GM12878 (cell line): ENCODE measurements at regions of chr2 and their contacts with region 1.

Region 1: GRCh38 chr2:117814417-117815264 is at the start of gene DDX18:
- DNase-seq: peak; percentile 93
- ATAC-seq: peak; percentile 88
- H3K4me3 ChIP-seq: peak within 1 kb of the TSS; percentile 90
- H3K27ac ChIP-seq: peak within 1 kb of the TSS; percentile 87
- H3K4me1 ChIP-seq: peaks cover 9% of the 10 kb centered on the region; the same call in 1 of the 2 replicates
- H3K27me3 ChIP-seq: no peaks in the 10 kb centered on the region
- CTCF ChIP-seq: peak; percentile 98 to 100 (median 100); a peak in 5 of 6 replicates
- EP300 ChIP-seq: peak in 1 of 2 experiments; percentile 42; a peak in 2 of 4 replicates
- POLR2A ChIP-seq: peak; percentile 90
- RAD21 ChIP-seq: peak; percentile 66
- polyA plus RNA-seq, gene DDX18: 54.3 to 60.3 TPM

Region 2: GRCh38 chr2:117776888-117777287 is 37.8 kb before region 1 on chr2:
- CTCF ChIA-PET with region 1: no interaction called
- POLR2A ChIA-PET with region 1: no interaction called
- RAD21 ChIA-PET with region 1: no interaction called
- SMC1A ChIA-PET with region 1: no interaction called
- in situ Hi-C with region 1: no loop called
- intact Hi-C with region 1: no loop called
- DNase-seq: no peak
- ATAC-seq: no peak
- H3K4me3 ChIP-seq: no peak overlapping the region
- H3K27ac ChIP-seq: no peak overlapping the region
- H3K4me1 ChIP-seq: no peaks in the 10 kb centered on the region
- H3K27me3 ChIP-seq: no peaks in the 10 kb centered on the region
- CTCF ChIP-seq: no peak
- EP300 ChIP-seq: no peak
- POLR2A ChIP-seq: no peak
- RAD21 ChIP-seq: no peak

Region 3: DNA sequence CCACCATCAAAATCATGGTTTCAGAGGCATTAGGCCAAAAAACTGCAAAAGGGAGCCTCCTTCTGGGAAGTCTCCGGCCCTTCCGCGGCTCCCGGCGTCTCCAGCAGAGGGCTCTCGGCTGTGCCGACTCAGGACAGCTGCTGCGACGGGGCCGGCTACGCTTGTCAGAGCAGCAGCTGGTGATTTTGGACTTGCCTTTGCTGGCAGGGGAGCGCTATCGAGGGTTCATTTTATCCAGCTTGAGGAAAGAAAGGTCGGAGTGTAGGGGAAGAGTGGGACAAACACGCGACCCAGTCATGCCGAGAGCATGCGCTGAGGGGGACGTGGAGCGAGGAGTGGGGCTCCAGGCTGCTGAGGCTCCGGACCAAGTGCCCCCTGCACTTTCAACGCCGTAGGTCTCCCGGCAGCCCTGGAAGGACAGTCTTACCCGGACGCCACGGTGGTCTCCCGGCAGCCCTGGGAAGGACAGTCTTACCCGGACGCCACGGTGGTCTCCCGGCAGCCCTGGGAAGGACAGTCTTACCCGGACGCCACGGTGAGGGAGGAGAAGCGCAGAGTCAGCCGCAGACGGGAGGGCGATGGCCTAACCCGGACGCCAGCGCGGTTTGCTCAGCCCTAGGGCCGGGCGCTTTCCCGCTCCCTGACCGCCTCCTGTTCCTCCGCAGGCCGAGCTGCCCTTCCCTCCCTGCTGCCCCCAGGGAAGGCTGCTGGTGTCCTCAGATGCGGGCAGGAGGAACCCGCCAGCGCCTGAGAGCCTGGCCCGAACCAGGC is 21.5 kb after region 1 on chr2:
- CTCF ChIA-PET with region 1: interaction called, 11 read pairs
- POLR2A ChIA-PET with region 1: no interaction called
- RAD21 ChIA-PET with region 1: interaction called, 3 read pairs
- SMC1A ChIA-PET with region 1: interaction called, 3 read pairs
- in situ Hi-C with region 1: no loop called
- intact Hi-C with region 1: no loop called
- DNase-seq: no peak
- ATAC-seq: peak; percentile 82
- H3K4me3 ChIP-seq: no peak overlapping the region
- H3K27ac ChIP-seq: no peak overlapping the region
- H3K4me1 ChIP-seq: no peaks in the 10 kb centered on the region
- H3K27me3 ChIP-seq: no peaks in the 10 kb centered on the region
- CTCF ChIP-seq: peak; percentile 50 to 64 (median 55)
- EP300 ChIP-seq: no peak
- POLR2A ChIP-seq: peak; percentile 37
- RAD21 ChIP-seq: peak; percentile 46

Region 4: GRCh38 chr2:117936871-117937428 is 122.3 kb after region 1 on chr2:
- CTCF ChIA-PET with region 1: interaction called, 6 read pairs
- POLR2A ChIA-PET with region 1: no interaction called
- RAD21 ChIA-PET with region 1: no interaction called
- SMC1A ChIA-PET with region 1: no interaction called
- in situ Hi-C with region 1: no loop called
- intact Hi-C with region 1: loop called (anchors 5 kb)
- DNase-seq: no peak
- ATAC-seq: no peak
- H3K4me3 ChIP-seq: no peak overlapping the region
- H3K27ac ChIP-seq: no peak overlapping the region
- H3K4me1 ChIP-seq: no peaks in the 10 kb centered on the region
- H3K27me3 ChIP-seq: no peaks in the 10 kb centered on the region
- CTCF ChIP-seq: no peak
- EP300 ChIP-seq: no peak
- POLR2A ChIP-seq: no peak
- RAD21 ChIP-seq: no peak

Region 5: DNA sequence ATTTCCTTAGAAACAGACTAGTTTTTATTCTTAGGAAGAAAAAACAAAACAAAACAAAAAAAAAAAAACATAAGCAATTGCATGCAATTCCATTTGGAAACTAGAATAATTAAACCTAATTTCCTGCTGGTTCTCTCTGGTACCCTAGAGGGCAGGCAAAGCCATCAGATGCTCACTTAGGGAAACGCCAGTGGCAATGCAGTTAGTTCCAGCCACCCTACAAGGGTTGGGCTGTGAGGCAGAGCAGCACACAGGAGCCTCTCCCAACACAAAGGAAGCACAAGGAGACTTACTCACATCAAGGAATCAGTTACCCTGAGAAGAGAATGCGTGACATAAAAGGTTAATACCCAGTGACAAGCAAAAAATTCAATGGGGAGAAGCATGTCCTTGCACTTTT is 170.5 kb after region 1 on chr2:
- CTCF ChIA-PET with region 1: interaction called, 21 read pairs
- POLR2A ChIA-PET with region 1: no interaction called
- RAD21 ChIA-PET with region 1: no interaction called
- SMC1A ChIA-PET with region 1: no interaction called
- in situ Hi-C with region 1: no loop called
- intact Hi-C with region 1: no loop called
- DNase-seq: no peak
- ATAC-seq: no peak
- H3K4me3 ChIP-seq: no peak overlapping the region
- H3K27ac ChIP-seq: no peak overlapping the region
- H3K4me1 ChIP-seq: no peaks in the 10 kb centered on the region
- H3K27me3 ChIP-seq: no peaks in the 10 kb centered on the region
- CTCF ChIP-seq: no peak
- EP300 ChIP-seq: no peak
- POLR2A ChIP-seq: no peak
- RAD21 ChIP-seq: no peak

Region 6: DNA sequence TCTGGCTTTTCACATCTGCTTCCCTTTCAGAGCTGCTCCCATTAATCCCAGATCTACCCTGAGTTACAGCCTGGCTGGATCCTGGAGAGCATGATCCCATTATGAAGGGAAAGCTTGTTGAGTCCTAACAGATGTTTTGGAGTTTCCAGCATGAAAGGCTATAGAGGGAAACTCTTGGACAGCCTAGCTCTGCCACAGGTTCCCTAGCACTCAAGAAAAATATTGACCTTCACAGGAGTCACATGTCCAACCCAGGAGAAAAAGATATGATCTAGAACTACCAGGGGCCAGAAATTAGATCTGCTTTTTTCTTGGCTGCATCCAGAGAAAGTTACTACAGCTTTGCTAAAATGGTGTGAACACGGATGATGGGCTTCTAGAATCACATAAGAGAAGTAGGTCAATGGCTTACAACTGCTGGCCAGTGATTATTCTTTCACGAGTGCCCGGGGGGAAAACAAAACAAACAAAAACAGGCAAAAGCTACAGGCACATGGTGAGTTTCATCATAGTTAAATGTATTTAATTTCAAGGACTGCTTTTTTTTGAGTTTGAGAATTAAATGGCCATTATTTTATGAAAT is 183.3 kb after region 1 on chr2:
- CTCF ChIA-PET with region 1: interaction called, 123 read pairs
- POLR2A ChIA-PET with region 1: interaction called, 6 read pairs
- RAD21 ChIA-PET with region 1: interaction called, 40 read pairs
- SMC1A ChIA-PET with region 1: interaction called, 51 read pairs
- in situ Hi-C with region 1: loop called (anchors 5 kb)
- intact Hi-C with region 1: loop called (anchors 1 kb)
- DNase-seq: no peak
- ATAC-seq: no peak
- H3K4me3 ChIP-seq: no peak overlapping the region
- H3K27ac ChIP-seq: no peak overlapping the region
- H3K4me1 ChIP-seq: no peaks in the 10 kb centered on the region
- H3K27me3 ChIP-seq: no peaks in the 10 kb centered on the region
- CTCF ChIP-seq: no peak
- EP300 ChIP-seq: no peak
- POLR2A ChIP-seq: no peak
- RAD21 ChIP-seq: no peak

Region 7: DNA sequence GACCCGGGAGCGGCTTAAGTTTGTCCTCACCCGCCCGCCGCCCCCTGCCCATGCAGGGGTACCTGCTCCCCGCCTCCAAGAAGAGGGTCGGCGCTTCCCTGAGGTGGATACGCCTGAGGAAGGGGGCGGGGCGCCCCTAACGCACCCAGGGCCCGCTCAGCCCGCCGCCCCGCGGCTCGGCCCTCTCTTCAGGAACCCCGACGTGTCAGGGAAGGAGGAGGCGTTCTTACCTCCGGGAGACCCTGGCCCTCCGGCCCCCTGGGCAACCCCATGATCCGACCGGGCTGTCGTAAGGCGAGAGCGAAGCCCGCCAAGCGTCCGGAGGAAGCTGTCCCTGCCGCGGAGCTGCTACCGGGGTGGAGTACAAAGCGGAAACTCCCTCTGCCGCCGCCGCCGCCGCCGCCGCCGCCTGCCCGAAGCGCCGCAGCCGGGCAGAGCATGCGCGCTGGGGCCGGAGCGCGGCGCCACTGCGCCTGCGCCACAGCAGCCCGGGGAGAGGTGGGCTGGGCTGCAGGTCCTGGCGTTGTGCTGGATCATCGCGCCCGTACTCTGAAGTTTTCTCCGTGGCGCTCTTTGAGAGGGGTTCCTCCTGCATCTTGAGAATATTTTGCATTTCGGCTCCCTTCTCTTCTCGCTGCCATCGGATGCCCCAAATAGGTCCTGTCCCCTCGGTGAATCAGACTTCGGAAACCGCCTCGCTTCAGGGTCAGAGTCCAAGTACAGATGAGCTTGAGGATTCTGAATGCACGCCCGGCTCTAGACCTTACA is 199.3 kb after region 1 on chr2 and contains the start of gene CCDC93:
- CTCF ChIA-PET with region 1: interaction called, 15 read pairs
- POLR2A ChIA-PET with region 1: interaction called, 4 read pairs
- RAD21 ChIA-PET with region 1: interaction called, 4 read pairs
- SMC1A ChIA-PET with region 1: interaction called, 4 read pairs
- in situ Hi-C with region 1: no loop called
- intact Hi-C with region 1: no loop called
- DNase-seq: peak; percentile 50
- ATAC-seq: peak; percentile 94
- H3K4me3 ChIP-seq: peak within 1 kb of the TSS; percentile 86
- H3K27ac ChIP-seq: peak within 1 kb of the TSS; percentile 87
- H3K4me1 ChIP-seq: peaks cover 5% of the 10 kb centered on the region
- H3K27me3 ChIP-seq: no peaks in the 10 kb centered on the region
- CTCF ChIP-seq: no peak
- EP300 ChIP-seq: no peak
- POLR2A ChIP-seq: peak; percentile 84
- RAD21 ChIP-seq: no peak
- polyA plus RNA-seq, gene CCDC93: 3.6 to 4.0 TPM

Region 8: DNA sequence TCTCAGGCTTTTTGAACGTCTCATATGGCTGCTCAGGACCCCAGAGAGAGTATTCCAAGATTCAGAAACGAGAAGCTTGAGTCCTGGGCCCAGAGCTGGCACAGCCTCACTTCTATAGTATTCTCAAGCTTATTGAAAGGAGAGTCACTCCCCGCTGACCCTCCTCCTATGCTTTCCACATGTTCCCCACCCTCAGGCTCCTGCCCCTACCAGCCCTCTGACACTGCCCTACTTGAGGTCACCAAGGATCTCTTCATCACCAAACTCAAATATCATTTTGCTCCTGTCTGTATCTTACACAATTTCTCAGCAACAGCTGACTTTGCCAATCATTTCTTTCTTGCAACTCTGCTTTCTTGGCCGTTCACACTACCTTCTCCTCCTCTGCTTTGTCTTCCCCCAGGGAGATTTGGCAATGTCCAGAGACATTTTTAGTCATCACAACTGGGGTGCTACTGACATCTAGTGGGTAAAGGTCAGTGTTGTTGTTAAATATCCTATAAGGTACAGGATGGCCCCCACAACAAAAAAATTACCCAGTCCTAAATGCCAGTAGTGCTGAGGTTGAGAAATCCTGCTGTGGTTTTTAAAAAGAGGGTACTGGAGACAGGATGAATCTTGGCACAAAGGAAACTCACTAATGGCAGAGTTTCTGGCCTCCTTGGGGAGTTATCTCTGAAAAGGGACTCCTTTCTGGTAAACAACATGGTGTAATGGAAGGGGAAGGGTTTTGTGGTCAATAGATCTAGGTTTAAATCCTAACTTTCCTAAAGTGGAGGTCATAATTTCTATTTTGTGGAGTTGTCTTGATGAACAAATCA is 246.7 kb after region 1 on chr2:
- CTCF ChIA-PET with region 1: interaction called, 6 read pairs
- POLR2A ChIA-PET with region 1: no interaction called
- RAD21 ChIA-PET with region 1: interaction called, 6 read pairs
- SMC1A ChIA-PET with region 1: no interaction called
- in situ Hi-C with region 1: no loop called
- intact Hi-C with region 1: loop called (anchors 10 kb)
- DNase-seq: peak; percentile 57
- ATAC-seq: peak; percentile 87
- H3K4me3 ChIP-seq: no peak overlapping the region
- H3K27ac ChIP-seq: no peak overlapping the region
- H3K4me1 ChIP-seq: peaks cover 27% of the 10 kb centered on the region
- H3K27me3 ChIP-seq: no peaks in the 10 kb centered on the region
- CTCF ChIP-seq: peak; percentile 67 to 76 (median 68)
- EP300 ChIP-seq: no peak
- POLR2A ChIP-seq: no peak
- RAD21 ChIP-seq: peak; percentile 98